ENCODE measurements at regions of chr1 and their contacts with region 1.

Region 1: GRCh38 chr1:173867753-173868265 is at the start of gene GAS5:
- DNase-seq: peak; percentile 100
- H3K4me3 Mint-ChIP-seq: peak within 1 kb of the TSS; percentile 94
- H3K27ac Mint-ChIP-seq: peak within 1 kb of the TSS; percentile 96
- H3K4me1 Mint-ChIP-seq: peaks cover 55% of the 10 kb centered on the region
- H3K27me3 Mint-ChIP-seq: no peaks in the 10 kb centered on the region
- CTCF ChIP-seq: no peak
- total RNA-seq, gene GAS5: 3,184 and 3,772 TPM in 2 replicates

Region 2: DNA sequence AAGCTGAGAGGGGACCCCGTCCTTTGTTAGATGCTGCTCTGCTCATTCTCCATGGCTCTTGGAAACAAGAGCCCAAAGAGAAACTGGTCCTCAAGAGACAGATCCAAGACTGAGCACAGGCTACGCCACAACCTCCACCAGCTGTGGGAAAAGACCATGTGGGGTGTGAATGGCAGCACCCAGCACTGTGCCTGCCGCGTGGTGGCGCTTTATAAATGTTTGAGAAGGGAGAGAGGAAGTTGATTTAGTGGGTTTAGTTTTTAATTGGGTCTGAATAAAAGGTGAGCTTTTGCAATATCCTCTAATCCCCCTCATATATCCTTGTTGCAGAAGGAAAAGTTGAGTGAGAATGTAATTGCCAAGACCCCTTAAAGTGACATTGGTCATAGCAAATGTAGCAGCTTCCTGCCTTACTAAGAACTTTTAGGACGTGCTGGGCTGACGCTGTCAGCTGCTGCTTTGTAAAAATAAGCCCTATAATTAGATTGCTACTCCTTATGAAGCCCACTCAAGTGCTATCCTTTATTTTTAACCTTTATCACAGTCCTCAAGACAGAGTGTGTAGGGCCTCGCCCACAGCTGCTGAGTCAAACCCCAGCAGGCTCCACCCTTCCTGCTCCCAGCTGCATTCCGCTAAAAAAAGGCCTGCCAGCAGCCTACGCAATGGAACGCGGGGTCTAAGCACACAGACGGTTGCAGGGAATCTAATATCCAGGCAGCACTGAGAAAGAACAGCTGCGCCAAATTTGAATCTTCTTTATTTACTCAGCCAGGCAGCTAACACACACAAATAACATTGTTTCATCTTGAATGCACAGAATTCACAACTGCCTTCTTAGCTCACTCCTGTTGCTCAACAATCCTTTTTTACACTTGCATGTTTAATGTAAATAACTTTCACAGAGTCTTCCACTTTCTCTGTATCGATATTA is 438.1 kb before region 1 on chr1:
- CTCF ChIA-PET with region 1: interaction called, 8 read pairs
- POLR2A ChIA-PET with region 1: interaction called, 21 read pairs
- intact Hi-C with region 1: loop called (anchors 1 kb)
- DNase-seq: peak; percentile 91
- H3K4me3 Mint-ChIP-seq: peak overlapping the region; percentile 60
- H3K27ac Mint-ChIP-seq: peak overlapping the region; percentile 93
- H3K4me1 Mint-ChIP-seq: peaks cover 43% of the 10 kb centered on the region
- H3K27me3 Mint-ChIP-seq: no peaks in the 10 kb centered on the region
- CTCF ChIP-seq: peak; percentile 39

Region 3: GRCh38 chr1:173824331-173825081 is 43.3 kb before region 1 on chr1 and contains the starts of genes CENPL and DARS2:
- CTCF ChIA-PET with region 1: interaction called, 7 read pairs
- POLR2A ChIA-PET with region 1: interaction called, 118 read pairs
- intact Hi-C with region 1: no loop called
- DNase-seq: peak; percentile 100
- H3K4me3 Mint-ChIP-seq: peak within 1 kb of the TSS; percentile 97
- H3K27ac Mint-ChIP-seq: peak within 1 kb of the TSS; percentile 98
- H3K4me1 Mint-ChIP-seq: peaks cover 39% of the 10 kb centered on the region
- H3K27me3 Mint-ChIP-seq: no peaks in the 10 kb centered on the region
- CTCF ChIP-seq: no peak
- total RNA-seq, gene CENPL: 14.1 and 24.5 TPM in 2 replicates
- total RNA-seq, gene DARS2: 34.6 and 40.4 TPM in 2 replicates

Region 4: DNA sequence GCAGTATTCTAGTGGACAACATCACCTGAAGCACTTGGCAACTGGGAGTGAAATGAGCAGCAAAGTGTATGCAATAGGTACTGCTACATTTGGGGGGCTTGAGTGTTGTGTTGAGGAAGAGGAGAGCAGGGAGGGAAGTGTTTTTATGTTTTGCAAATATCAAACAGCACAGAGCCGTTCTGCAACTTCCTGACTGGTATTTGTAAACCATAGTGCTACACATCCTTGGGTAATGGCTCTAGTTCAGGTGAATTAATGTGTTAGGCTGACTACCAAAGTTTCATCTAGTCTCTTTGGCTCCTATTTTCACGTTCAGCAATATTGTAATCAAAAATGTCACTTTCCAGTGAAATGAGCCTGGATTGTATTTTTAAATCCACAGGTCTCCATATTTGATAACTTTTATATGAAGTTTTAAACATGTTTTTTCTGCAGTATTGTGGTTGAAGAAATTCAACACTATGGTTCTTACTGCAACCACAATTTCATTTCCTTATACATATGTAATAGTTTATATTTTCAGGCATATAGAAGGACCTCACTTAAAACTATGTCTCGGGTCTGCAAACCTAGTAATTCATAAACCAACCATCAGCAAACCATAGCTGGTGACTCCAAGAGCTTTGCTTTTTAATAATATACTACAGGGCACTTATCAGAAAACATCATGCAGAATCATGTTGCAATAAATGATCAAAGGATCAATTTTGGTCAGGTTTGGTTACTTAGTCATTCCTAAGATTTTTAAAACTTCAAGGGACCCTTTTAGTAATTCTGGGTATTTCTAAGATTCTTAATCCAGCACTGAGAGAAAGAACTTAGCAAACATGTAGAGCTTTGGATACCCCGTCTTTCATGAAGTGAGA is 19.2 kb after region 1 on chr1:
- CTCF ChIA-PET with region 1: interaction called, 4 read pairs
- POLR2A ChIA-PET with region 1: interaction called, 18 read pairs
- intact Hi-C with region 1: no loop called
- DNase-seq: no peak
- H3K4me3 Mint-ChIP-seq: no peak overlapping the region
- H3K27ac Mint-ChIP-seq: no peak overlapping the region
- H3K4me1 Mint-ChIP-seq: no peaks in the 10 kb centered on the region
- H3K27me3 Mint-ChIP-seq: no peaks in the 10 kb centered on the region
- CTCF ChIP-seq: no peak

Region 5: DNA sequence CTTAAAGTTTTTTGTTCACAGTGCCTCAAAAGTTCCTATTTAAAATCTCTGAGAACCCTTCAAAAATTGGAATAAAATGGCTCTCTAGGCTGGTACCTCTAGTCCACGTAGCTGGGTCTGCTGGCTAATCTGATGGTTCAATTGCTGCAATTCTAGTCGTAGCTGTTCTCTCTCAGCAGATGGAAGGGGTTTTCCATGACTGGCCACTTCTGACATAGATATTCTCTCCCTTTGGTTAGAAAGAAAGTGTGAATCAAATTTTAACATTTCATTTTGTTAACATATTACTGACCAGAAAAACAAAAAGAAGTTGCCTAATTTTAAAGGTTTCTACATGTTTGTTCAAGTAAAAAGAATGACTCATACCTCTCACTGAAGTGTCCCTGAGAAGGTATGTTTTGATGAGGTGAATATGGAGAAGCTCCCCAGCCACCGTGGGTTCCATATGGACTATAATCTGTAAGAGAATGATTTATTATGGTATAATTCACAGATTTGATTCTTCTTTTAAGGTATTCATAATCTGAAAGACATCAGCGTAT is 78.6 kb after region 1 on chr1:
- CTCF ChIA-PET with region 1: interaction called, 3 read pairs
- POLR2A ChIA-PET with region 1: interaction called, 50 read pairs
- intact Hi-C with region 1: loop called (anchors 5 kb)
- DNase-seq: peak; percentile 82
- H3K4me3 Mint-ChIP-seq: no peak overlapping the region
- H3K27ac Mint-ChIP-seq: peak overlapping the region; percentile 90
- H3K4me1 Mint-ChIP-seq: peaks cover 15% of the 10 kb centered on the region
- H3K27me3 Mint-ChIP-seq: no peaks in the 10 kb centered on the region
- CTCF ChIP-seq: no peak

Region 6: GRCh38 chr1:174153085-174153825 is 285.4 kb after region 1 on chr1:
- CTCF ChIA-PET with region 1: no interaction called
- POLR2A ChIA-PET with region 1: interaction called, 12 read pairs
- intact Hi-C with region 1: loop called (anchors 5 kb)
- DNase-seq: peak; percentile 84
- H3K4me3 Mint-ChIP-seq: no peak overlapping the region
- H3K27ac Mint-ChIP-seq: peak overlapping the region; percentile 20
- H3K4me1 Mint-ChIP-seq: peaks cover 27% of the 10 kb centered on the region
- H3K27me3 Mint-ChIP-seq: no peaks in the 10 kb centered on the region
- CTCF ChIP-seq: no peak

Region 7: DNA sequence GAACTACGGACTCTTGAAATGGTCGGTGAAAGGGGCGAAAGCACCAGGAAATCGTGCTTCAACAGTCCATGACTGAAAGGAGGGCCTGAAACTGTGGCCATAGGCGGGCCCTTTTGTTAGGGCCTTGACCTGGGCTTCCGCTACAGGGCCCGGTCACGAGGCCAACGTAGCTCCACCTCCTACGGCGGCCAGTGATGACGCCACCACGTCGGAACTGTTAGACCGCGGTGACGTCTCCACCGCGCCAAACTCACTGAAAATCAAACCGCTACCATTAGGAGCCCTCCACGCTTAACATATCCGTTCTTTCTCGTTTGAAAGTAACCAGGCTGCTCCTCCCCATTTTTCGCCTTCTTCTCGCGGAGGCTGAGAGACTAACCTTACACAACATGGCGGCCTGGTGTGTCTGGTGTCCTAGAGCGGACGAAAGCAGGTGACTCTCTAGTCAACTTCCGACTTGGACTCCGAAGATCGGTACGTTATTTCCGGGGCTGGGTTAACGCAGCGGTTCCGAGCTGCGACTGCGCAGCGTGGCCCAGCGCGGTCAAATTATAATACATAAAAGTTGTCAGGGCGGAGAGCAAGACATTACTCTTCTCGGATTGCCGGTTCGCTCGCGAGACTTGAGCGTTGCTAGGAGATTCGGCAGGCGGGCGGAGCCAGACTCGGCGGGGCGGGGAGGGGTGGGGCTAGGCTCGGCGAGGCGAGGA is 1131.6 kb after region 1 on chr1:
- CTCF ChIA-PET with region 1: no interaction called
- POLR2A ChIA-PET with region 1: interaction called, 20 read pairs
- intact Hi-C with region 1: no loop called
- DNase-seq: peak; percentile 100
- H3K4me3 Mint-ChIP-seq: no peak overlapping the region
- H3K27ac Mint-ChIP-seq: no peak overlapping the region
- H3K4me1 Mint-ChIP-seq: peaks cover 41% of the 10 kb centered on the region
- H3K27me3 Mint-ChIP-seq: no peaks in the 10 kb centered on the region
- CTCF ChIP-seq: no peak

Measured in MCF 10A (cell line).